Lower leg skin (tissue), 4 donors: ENCODE measurements at regions of chr11 and their contacts with region 1.

Region 1: DNA sequence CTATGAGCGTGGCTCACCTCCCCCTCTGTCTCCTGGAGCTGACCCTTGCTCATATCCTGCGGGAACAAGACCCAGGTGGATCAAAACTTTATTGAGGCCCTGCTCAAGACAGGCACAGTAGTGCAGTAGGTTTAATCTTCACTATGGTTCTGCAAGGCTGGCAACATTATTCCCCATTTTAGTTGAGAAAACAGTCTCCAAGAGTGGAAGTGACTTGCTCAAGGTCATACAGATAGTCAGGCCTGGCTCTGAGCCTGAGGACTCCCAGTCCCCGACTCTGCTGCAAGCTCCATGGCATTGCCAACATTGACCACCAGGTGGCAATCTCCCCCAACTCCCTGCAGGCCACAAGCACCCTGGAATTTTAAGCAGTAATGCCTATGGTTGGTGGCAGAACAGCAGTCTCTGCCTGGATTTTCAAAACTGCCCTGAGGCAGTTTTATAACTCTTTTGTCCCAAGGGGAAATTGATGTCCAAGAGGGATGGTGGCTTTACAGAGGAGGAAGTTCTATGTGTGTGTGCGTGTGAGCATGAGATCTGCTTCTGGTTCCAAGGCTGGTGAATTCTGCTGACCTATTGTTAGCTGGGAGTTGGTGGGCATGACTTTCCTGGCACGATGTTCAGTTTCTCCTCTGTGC is 34.1 kb downstream of the NEU3 start:
- DNase-seq: peak; percentile 65 to 94
- H3K4me3 ChIP-seq: no peak overlapping the region
- CTCF ChIP-seq: peak in 1 of 3 donors; percentile 58
- POLR2A ChIP-seq: no peak

Region 2: GRCh38 chr11:75241036-75241905 is 218.4 kb after region 1 on chr11:
- intact Hi-C with region 1: loop called (anchors 10 kb)
- DNase-seq: peak; percentile 63 to 94
- H3K4me3 ChIP-seq: no peak overlapping the region
- CTCF ChIP-seq: no peak
- POLR2A ChIP-seq: no peak